CD8-positive, alpha-beta T cell (primary cell): ENCODE measurements at regions of chr7 and their contacts with region 1.

Region 1: GRCh38 chr7:156568258-156568657 is 72.3 kb upstream of the RNF32 start:
- DNase-seq: no peak
- ATAC-seq: no peak
- H3K4me3 ChIP-seq: no peak overlapping the region
- H3K4me3 Mint-ChIP-seq: no peak overlapping the region
- H3K27ac ChIP-seq: no peak overlapping the region
- H3K27ac Mint-ChIP-seq: no peak overlapping the region
- H3K4me1 ChIP-seq: no peaks in the 10 kb centered on the region
- H3K4me1 Mint-ChIP-seq: no peaks in the 10 kb centered on the region
- H3K27me3 ChIP-seq: peaks cover 0 to 2% of the 10 kb centered on the region in 2 experiments
- H3K27me3 Mint-ChIP-seq: peaks cover 10% of the 10 kb centered on the region
- CTCF ChIP-seq: no peak

Region 2: DNA sequence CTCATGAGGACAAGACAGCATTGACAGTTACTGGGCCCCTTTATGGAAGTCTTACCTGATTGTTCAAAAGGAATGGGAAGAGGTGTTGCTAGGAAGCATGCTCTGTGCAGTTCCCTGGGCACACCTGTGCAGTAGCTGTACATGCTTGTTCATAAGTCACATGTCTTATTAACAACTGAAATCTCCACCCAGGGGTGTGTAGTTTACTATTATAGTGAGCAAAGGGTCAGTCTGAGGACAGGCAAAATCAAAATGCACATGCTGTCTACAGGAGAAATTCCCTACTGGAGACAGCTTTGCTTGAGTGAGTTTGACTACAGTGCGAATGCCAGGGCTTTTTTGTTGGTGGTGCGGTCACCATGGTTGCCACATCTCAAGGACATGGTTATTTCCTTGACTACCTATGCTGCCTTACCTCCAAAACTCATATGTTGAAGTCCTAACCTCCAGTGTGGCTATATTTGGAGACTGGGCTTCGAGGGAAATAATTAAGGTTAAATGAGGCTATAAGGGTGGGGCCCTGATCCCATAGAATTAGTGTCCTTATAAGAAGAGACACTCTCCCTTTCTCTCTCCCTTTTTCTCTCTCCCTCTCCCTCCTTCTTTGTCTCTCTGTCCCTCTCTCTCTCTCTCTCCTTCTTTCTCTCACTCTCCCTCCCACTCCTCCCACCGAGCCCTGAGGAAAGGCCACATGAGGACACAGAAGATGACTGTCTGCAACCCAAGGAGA is 24.1 kb after region 1 on chr7:
- CTCF ChIA-PET with region 1: no interaction called
- POLR2A ChIA-PET with region 1: no interaction called
- intact Hi-C with region 1: loop called in 1 of 2 experiments (anchors 2 kb)
- DNase-seq: no peak
- ATAC-seq: no peak
- H3K4me3 ChIP-seq: no peak overlapping the region
- H3K4me3 Mint-ChIP-seq: no peak overlapping the region
- H3K27ac ChIP-seq: no peak overlapping the region
- H3K27ac Mint-ChIP-seq: no peak overlapping the region
- H3K4me1 ChIP-seq: no peaks in the 10 kb centered on the region
- H3K4me1 Mint-ChIP-seq: no peaks in the 10 kb centered on the region
- H3K27me3 ChIP-seq: no peaks in the 10 kb centered on the region
- H3K27me3 Mint-ChIP-seq: peaks cover 4% of the 10 kb centered on the region
- CTCF ChIP-seq: no peak